Activated CD4-positive, alpha-beta T cell treated with anti-CD3 and anti-CD28 coated beads, Interleukin-2, amount 10 ng/mL, durations not matched to agents 24 days and 14 days (primary cell): ENCODE measurements at regions of chr1 and their contacts with region 1.

Region 1: GRCh38 chr1:225467193-225468020 is 39.6 kb upstream of the LBR start:
- DNase-seq: peak; percentile 95
- H3K4me3 Mint-ChIP-seq: peak overlapping the region; percentile 94
- H3K27ac Mint-ChIP-seq: peak overlapping the region; percentile 98
- H3K4me1 Mint-ChIP-seq: peaks cover 39% of the 10 kb centered on the region
- H3K27me3 Mint-ChIP-seq: no peaks in the 10 kb centered on the region

Region 2: DNA sequence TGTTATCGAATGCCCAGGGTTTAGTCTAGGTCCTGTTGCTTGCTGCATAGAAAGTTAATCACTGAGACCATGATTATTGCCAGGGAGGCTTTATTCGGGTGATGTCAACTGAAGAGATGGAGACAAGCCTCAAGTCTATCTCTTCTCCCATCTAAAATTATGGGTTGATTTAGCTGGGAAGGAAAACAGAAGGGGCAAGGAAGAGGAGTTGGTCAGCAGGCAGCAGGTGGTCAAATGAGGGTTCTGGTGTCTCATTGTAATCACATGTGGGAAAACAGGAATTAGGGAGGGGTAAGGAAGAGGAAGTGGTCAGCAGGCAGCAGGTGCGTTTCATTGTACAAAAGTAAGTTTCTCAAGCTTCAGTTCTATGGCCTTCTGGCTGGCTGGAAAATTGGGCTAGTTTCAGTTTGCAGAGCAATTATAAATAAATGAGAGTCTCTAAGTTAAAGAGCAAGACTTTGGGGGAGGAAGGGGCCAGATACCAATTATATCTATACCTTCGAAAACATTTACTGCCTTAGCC is 684.2 kb before region 1 on chr1:
- intact Hi-C with region 1: no loop called
- DNase-seq: no peak
- H3K4me3 Mint-ChIP-seq: no peak overlapping the region
- H3K27ac Mint-ChIP-seq: no peak overlapping the region
- H3K4me1 Mint-ChIP-seq: peaks cover 13% of the 10 kb centered on the region
- H3K27me3 Mint-ChIP-seq: no peaks in the 10 kb centered on the region

Region 3: DNA sequence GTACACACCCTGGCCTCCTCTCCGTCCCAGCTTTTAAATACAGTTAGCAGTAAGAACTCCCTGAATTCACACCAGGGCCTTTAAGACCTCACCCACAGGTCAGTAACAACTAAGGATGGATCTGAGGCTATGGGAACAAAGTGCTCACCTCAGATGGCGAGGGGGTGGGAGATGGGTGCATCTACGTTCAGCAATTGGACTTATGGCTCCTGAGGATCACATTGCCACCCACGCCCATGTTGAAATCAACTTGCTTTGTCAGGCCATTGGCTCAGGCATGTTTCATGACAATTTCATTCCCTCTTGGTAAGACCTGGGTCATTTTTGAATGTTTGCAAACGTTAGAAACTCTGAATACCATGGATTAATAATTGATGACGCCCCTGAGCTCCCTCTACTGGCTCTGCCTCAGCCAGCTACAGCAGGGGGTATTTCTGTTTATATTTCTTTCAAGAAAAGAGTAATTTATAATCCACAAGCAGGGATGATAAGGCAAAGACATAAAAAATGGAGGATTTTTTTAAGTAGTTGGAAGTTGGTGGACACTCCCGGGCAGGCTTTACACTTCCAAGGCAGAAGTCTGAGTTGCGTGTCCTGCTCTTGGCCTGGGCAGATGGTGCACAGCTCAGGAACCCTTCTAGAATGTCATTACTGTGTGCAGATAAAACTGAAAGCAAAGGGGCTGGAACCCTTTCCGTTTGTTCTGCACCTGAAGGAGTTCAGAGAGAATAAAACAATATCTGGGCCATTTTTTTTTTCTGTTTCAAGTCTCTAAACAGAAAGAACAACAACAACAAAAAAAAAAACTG is 25.9 kb before region 1 on chr1:
- intact Hi-C with region 1: loop called (anchors 1 kb)
- DNase-seq: no peak
- H3K4me3 Mint-ChIP-seq: peak overlapping the region; percentile 61
- H3K27ac Mint-ChIP-seq: peak overlapping the region; percentile 76
- H3K4me1 Mint-ChIP-seq: peaks cover 60% of the 10 kb centered on the region
- H3K27me3 Mint-ChIP-seq: peaks cover 2% of the 10 kb centered on the region

Region 4: GRCh38 chr1:225454733-225455132 is 12.7 kb before region 1 on chr1:
- intact Hi-C with region 1: loop called (anchors 1 kb)
- DNase-seq: peak; percentile 79
- H3K4me3 Mint-ChIP-seq: peak overlapping the region; percentile 75
- H3K27ac Mint-ChIP-seq: peak overlapping the region; percentile 92
- H3K4me1 Mint-ChIP-seq: peaks cover 41% of the 10 kb centered on the region
- H3K27me3 Mint-ChIP-seq: no peaks in the 10 kb centered on the region

Region 5: GRCh38 chr1:225710804-225711203 is 243.4 kb after region 1 on chr1:
- intact Hi-C with region 1: no loop called
- DNase-seq: no peak
- H3K4me3 Mint-ChIP-seq: no peak overlapping the region
- H3K27ac Mint-ChIP-seq: no peak overlapping the region
- H3K4me1 Mint-ChIP-seq: no peaks in the 10 kb centered on the region
- H3K27me3 Mint-ChIP-seq: no peaks in the 10 kb centered on the region

Region 6: GRCh38 chr1:225923692-225924555 is 456.5 kb after region 1 on chr1 and contains the start of gene PYCR2:
- intact Hi-C with region 1: loop called (anchors 1 kb)
- DNase-seq: peak; percentile 99
- H3K4me3 Mint-ChIP-seq: peak within 1 kb of the TSS; percentile 97
- H3K27ac Mint-ChIP-seq: peak within 1 kb of the TSS; percentile 95
- H3K4me1 Mint-ChIP-seq: peaks cover 39% of the 10 kb centered on the region
- H3K27me3 Mint-ChIP-seq: no peaks in the 10 kb centered on the region
- total RNA-seq, gene PYCR2: 144 and 150 TPM in 2 replicates